Posterior vena cava (tissue), 2 donors: ENCODE measurements at regions of chr2 and their contacts with region 1.

Region 1: GRCh38 chr2:120574620-120575019 is 161.0 kb upstream of the GLI2 start:
- DNase-seq: no peak

Region 2: GRCh38 chr2:120594840-120595685 is 20.4 kb after region 1 on chr2:
- intact Hi-C with region 1: loop called in 1 of 2 experiments (anchors 1 kb)
- DNase-seq: no peak